Esophagus muscularis mucosa (tissue), 4 donors: ENCODE measurements at regions of chr6 and their contacts with region 1.

Region 1: DNA sequence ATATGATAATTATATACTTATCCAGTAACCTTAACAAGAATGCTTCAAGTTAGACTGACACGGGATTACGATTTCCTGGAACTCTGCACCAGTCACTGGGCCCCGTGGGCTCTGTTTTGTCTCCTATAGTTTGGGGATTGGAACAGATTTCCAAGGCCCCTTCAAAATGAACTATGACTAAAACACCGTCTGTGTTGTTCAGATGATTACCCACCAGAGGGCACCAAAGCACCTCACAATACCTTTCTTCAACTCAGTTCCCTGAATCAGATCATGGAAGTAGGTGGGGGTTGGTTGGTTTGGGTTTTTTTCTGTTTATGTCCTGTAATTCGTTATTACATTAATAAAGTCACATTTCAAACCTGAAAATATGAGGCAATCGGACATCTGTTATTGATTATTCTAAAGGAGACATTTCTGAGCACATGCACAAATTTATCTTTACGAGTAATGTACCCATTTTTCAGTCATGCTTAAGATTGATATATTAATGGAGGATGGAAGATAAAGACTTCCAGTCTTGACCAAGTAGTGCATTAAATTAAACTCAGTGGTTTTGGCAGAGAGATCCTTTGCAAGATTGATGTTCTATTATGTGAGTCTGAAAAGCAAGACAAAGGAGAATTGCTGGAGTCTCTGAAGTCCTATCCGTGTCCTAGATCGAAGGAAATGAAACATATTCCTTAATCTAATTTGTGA is 112.0 kb upstream of the COL21A1 start:
- DNase-seq: no peak
- H3K4me3 ChIP-seq: no peak overlapping the region
- H3K27ac ChIP-seq: no peak overlapping the region
- H3K4me1 ChIP-seq: peaks cover 2 to 22% (median 18%) of the 10 kb centered on the region in 4 donors
- H3K27me3 ChIP-seq: no peaks in the 10 kb centered on the region
- CTCF ChIP-seq: peak; percentile 85 to 90 (median 86)
- EP300 ChIP-seq: no peak
- POLR2A ChIP-seq: no peak

Region 2: GRCh38 chr6:56193846-56194245 is 165.5 kb before region 1 on chr6:
- intact Hi-C with region 1: no loop called
- DNase-seq: no peak
- H3K4me3 ChIP-seq: no peak overlapping the region
- H3K27ac ChIP-seq: no peak overlapping the region
- H3K4me1 ChIP-seq: no peaks in the 10 kb centered on the region
- H3K27me3 ChIP-seq: no peaks in the 10 kb centered on the region
- CTCF ChIP-seq: no peak
- EP300 ChIP-seq: no peak
- POLR2A ChIP-seq: no peak

Region 3: GRCh38 chr6:56595490-56596122 is 236.3 kb after region 1 on chr6:
- intact Hi-C with region 1: loop called (anchors 2 kb)
- DNase-seq: no peak
- H3K4me3 ChIP-seq: no peak overlapping the region
- H3K27ac ChIP-seq: peak overlapping the region; percentile 32 to 43 (median 38)
- H3K4me1 ChIP-seq: peaks cover 0 to 43% (median 40%) of the 10 kb centered on the region in 4 donors
- H3K27me3 ChIP-seq: no peaks in the 10 kb centered on the region
- CTCF ChIP-seq: peak; percentile 46 to 68 (median 55)
- EP300 ChIP-seq: no peak
- POLR2A ChIP-seq: no peak

Region 4: GRCh38 chr6:56699066-56699654 is 339.8 kb after region 1 on chr6:
- intact Hi-C with region 1: loop called (anchors 10 kb)
- DNase-seq: no peak
- H3K4me3 ChIP-seq: no peak overlapping the region
- H3K27ac ChIP-seq: no peak overlapping the region
- H3K4me1 ChIP-seq: peaks cover 4 to 46% (median 32%) of the 10 kb centered on the region in 4 donors
- H3K27me3 ChIP-seq: no peaks in the 10 kb centered on the region
- CTCF ChIP-seq: peak; percentile 51 to 62 (median 60)
- EP300 ChIP-seq: no peak
- POLR2A ChIP-seq: no peak

Region 5: DNA sequence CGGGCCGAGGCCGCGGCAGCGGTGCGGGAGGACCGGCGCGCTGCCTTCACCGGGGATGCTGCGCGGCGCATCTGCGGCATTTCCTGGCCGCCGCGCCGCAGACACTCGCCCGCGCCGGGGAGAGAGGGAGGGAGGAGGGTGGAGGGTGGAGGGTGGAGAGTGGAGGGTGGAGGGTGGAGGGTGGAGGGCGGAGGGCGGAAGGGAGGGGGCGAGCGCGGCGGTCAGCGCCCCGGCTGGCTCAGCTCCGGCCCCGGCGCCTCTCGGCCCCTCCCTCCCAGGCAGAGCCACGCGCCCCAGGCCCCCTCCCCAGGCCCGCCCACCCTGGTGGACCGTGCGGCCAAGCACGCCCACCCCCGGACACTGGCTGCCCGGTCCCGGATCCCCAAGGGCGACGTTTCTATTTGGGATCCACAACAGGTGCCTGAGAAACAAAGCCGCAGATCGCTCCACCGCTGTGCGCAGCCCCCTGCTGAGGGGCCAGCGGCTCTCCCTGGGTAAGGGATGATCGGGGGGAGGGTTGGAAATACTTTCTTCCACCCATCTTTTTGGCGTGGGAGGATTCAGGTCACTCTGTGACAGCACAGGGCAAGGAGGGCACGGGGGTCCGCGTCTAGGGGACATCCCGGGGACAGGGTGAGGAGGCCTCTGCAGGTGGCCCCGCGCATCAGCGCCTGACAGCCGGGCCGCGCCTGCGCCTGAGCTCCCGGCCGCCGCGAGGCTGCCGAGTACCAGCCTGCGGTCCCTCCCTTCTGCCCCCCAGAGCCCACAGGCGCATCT is 484.4 kb after region 1 on chr6:
- intact Hi-C with region 1: loop called (anchors 10 kb)
- DNase-seq: no peak
- H3K4me3 ChIP-seq: peak overlapping the region; percentile 84 to 94 (median 90)
- H3K27ac ChIP-seq: peak overlapping the region; percentile 92 to 96 (median 94)
- H3K4me1 ChIP-seq: peaks cover 4 to 44% (median 35%) of the 10 kb centered on the region in 4 donors
- H3K27me3 ChIP-seq: no peaks in the 10 kb centered on the region
- CTCF ChIP-seq: peak in 2 of 3 experiments; percentile 73 to 74
- EP300 ChIP-seq: no peak
- POLR2A ChIP-seq: peak; percentile 64